ENCODE measurements at regions of chr2 and their contacts with region 1.

Region 1: GRCh38 chr2:231514103-231514950 is 15.9 kb downstream of the NMUR1 start:
- DNase-seq: peak; percentile 97
- H3K4me3 ChIP-seq: peak overlapping the region; percentile 54 to 79 (median 76)
- H3K27ac ChIP-seq: peak overlapping the region; percentile 62
- H3K4me1 ChIP-seq: peaks cover 12% of the 10 kb centered on the region
- H3K27me3 ChIP-seq: peaks cover 0 to 3% of the 10 kb centered on the region in 2 experiments
- CTCF ChIP-seq: no peak
- POLR2A ChIP-seq: peak; percentile 86

Region 2: GRCh38 chr2:231394211-231395141 is 119.9 kb before region 1 on chr2:
- CTCF ChIA-PET with region 1: no interaction called
- POLR2A ChIA-PET with region 1: no interaction called
- dilution Hi-C with region 1: no loop called
- intact Hi-C with region 1: no loop called
- DNase-seq: no peak
- H3K4me3 ChIP-seq: no peak overlapping the region
- H3K27ac ChIP-seq: no peak overlapping the region
- H3K4me1 ChIP-seq: no peaks in the 10 kb centered on the region
- H3K27me3 ChIP-seq: peaks cover 0 to 8% of the 10 kb centered on the region in 2 experiments
- CTCF ChIP-seq: peak in 1 of 2 donors; percentile 13
- POLR2A ChIP-seq: no peak

Region 3: GRCh38 chr2:231482806-231483391 is 31.4 kb before region 1 on chr2:
- CTCF ChIA-PET with region 1: interaction called, 12 read pairs
- POLR2A ChIA-PET with region 1: no interaction called
- dilution Hi-C with region 1: no loop called
- intact Hi-C with region 1: loop called (anchors 1 kb)
- DNase-seq: peak; percentile 75
- H3K4me3 ChIP-seq: peak overlapping the region; percentile 9 to 46 (median 39)
- H3K27ac ChIP-seq: peak overlapping the region; percentile 50
- H3K4me1 ChIP-seq: peaks cover 9% of the 10 kb centered on the region
- H3K27me3 ChIP-seq: no peaks in the 10 kb centered on the region
- CTCF ChIP-seq: peak; percentile 95 to 98
- POLR2A ChIP-seq: no peak

Region 4: DNA sequence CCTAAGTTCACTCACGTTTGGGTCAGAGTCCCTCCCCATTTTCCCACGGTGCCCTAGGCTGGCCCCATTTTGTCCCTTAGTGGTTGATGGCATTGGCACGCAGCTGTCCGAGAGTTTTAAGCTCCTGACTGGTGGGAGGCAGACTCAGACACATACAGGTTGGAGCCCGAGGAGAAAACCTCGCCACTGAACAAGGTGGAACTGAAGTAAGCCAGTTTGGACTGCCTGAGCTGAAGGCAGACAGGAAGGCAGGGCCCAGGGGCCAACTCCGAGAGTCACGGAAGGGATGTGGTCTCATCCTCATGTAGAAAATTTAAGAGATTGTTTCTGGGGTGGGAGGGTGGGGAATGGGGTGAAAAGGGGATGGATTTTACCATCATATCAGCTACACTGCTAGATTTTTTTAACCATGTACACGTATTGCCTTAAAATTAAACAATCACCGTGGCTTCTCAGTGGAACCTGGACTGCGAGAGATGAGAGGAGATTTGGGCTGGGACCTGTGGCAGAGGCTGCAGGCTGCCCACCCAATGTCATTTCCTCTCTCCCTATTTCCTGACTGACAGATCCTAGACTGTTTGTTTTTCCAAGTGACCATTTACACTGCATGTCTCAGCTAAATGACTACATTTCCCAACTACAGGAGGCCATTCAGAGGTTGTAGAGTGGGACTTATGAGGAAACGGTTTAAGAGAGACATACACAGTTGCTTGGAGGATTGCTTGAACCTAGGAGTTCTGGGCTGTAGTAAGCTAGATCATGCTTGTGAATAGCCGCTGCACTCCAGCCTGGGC is 35.3 kb after region 1 on chr2:
- CTCF ChIA-PET with region 1: interaction called, 40 read pairs
- POLR2A ChIA-PET with region 1: no interaction called
- dilution Hi-C with region 1: no loop called
- intact Hi-C with region 1: no loop called
- DNase-seq: peak; percentile 22
- H3K4me3 ChIP-seq: no peak overlapping the region
- H3K27ac ChIP-seq: no peak overlapping the region
- H3K4me1 ChIP-seq: peaks cover 9% of the 10 kb centered on the region
- H3K27me3 ChIP-seq: no peaks in the 10 kb centered on the region
- CTCF ChIP-seq: no peak
- POLR2A ChIP-seq: no peak

Region 5: GRCh38 chr2:231604685-231605606 is 90.6 kb after region 1 on chr2:
- CTCF ChIA-PET with region 1: interaction called, 50 read pairs
- POLR2A ChIA-PET with region 1: no interaction called
- dilution Hi-C with region 1: no loop called
- intact Hi-C with region 1: loop called (anchors 1 kb)
- DNase-seq: peak; percentile 98
- H3K4me3 ChIP-seq: peak overlapping the region in 2 of 3 experiments; percentile 48 to 53
- H3K27ac ChIP-seq: peak overlapping the region; percentile 92
- H3K4me1 ChIP-seq: peaks cover 10% of the 10 kb centered on the region
- H3K27me3 ChIP-seq: no peaks in the 10 kb centered on the region
- CTCF ChIP-seq: no peak
- POLR2A ChIP-seq: no peak

Region 6: GRCh38 chr2:231780909-231781797 is 266.8 kb after region 1 on chr2 and contains the start of gene PDE6D:
- CTCF ChIA-PET with region 1: no interaction called
- POLR2A ChIA-PET with region 1: no interaction called
- dilution Hi-C with region 1: no loop called
- intact Hi-C with region 1: loop called (anchors 1 kb)
- DNase-seq: peak; percentile 99
- H3K4me3 ChIP-seq: peak within 1 kb of the TSS; percentile 50 to 86 (median 85)
- H3K27ac ChIP-seq: peak within 1 kb of the TSS; percentile 68
- H3K4me1 ChIP-seq: peaks cover 24% of the 10 kb centered on the region
- H3K27me3 ChIP-seq: no peaks in the 10 kb centered on the region
- CTCF ChIP-seq: no peak
- POLR2A ChIP-seq: peak; percentile 67
- total RNA-seq, gene PDE6D: 23.8 and 24.3 TPM in 2 replicates